CD14-positive monocyte (primary cell): ENCODE measurements at regions of chr19 and their contacts with region 1.

Region 1: GRCh38 chr19:51367565-51368365 is 1.0 kb downstream of the CLDND2 start:
- DNase-seq: peak; percentile 94 to 98 (median 95)
- H3K4me3 ChIP-seq: peak overlapping the region; percentile 89 to 93 (median 91)
- H3K4me3 Mint-ChIP-seq: peak overlapping the region; percentile 96 to 99
- H3K27ac ChIP-seq: peak overlapping the region; percentile 92 to 93
- H3K27ac Mint-ChIP-seq: peak overlapping the region; percentile 93 to 99 (median 97)
- H3K4me1 ChIP-seq: peaks cover 51 to 83% of the 10 kb centered on the region in 2 donors
- H3K4me1 Mint-ChIP-seq: peaks cover 71% of the 10 kb centered on the region
- H3K27me3 ChIP-seq: no peaks in the 10 kb centered on the region
- H3K27me3 Mint-ChIP-seq: peaks cover 0 to 6% (median 0%) of the 10 kb centered on the region in 3 donors
- CTCF ChIP-seq: no peak

Region 2: DNA sequence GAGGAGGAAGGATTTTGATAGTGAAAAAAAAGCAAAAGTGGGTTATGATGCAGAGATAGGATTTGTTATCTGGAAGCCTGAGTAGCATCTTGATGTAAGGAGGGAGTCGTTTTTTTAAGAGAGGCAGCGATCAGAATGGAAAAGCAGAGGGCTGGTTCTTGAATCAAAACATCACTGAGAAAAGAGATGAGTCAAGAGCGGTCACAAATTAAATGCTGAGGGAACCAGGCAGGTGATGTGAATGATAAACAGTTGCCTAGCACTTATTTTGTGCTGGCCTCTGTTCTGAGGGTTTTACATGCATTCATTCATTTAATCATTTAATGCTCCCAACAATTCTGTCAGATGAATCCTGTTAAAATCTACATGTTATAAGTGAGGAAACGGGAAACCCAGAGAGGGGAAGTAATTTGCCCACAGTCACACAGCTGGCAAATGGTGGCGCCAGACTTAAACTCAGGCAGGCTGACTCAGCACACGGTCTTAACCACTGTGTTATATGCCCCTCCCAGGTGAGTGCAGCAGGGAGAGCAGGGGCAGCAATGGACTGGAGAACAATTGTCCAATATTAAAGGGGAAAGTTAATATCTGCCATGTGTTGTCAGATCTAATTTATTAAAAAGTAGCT is 95.5 kb before region 1 on chr19:
- intact Hi-C with region 1: no loop called
- DNase-seq: peak; percentile 40 to 74 (median 53)
- H3K4me3 ChIP-seq: peak overlapping the region in 1 of 3 experiments; percentile 3
- H3K4me3 Mint-ChIP-seq: peak overlapping the region in 1 of 2 donors; percentile 54
- H3K27ac ChIP-seq: peak overlapping the region in 1 of 2 donors; percentile 52
- H3K27ac Mint-ChIP-seq: peak overlapping the region; percentile 46 to 88 (median 79)
- H3K4me1 ChIP-seq: peaks cover 17 to 34% of the 10 kb centered on the region in 2 donors
- H3K4me1 Mint-ChIP-seq: peaks cover 40% of the 10 kb centered on the region
- H3K27me3 ChIP-seq: no peaks in the 10 kb centered on the region
- H3K27me3 Mint-ChIP-seq: peaks cover 2 to 3% (median 2%) of the 10 kb centered on the region in 3 donors
- CTCF ChIP-seq: no peak

Region 3: DNA sequence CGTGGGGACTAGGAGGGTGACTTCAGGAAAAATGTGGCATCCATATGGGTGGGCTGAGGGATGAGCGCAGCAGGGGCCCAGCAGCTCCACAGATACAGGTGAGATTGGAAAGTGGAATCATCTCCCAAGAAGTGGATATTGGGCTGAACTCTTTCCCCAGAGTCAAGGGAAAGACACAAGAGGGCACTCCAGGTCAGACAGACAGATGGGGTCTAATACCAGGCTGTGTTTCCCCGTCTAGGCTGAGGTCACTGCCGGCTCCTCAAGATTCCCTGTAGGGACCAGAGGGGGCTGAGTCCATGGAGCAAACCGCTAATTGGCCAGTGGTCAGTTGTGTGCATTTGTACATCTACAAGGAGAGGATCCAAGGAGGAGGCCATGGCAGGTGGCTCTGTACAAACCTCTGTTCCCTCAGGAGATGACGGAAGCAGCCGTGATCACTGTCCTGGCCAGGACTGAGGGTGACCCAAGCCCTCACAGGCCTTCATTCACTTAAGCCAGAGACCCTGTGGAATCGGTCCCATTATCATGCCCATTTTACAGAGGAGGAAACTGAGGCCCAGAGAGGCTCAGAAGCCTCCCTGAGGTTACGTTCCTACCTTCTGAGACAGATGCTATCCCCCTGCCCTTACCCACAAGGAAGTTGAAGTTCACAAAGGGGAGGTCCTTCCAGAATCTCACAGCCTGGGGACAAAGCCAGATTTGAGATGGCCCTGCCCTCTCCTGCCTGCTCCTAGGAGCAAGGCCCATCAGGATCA is 71.2 kb before region 1 on chr19:
- intact Hi-C with region 1: no loop called
- DNase-seq: no peak
- H3K4me3 ChIP-seq: no peak overlapping the region
- H3K4me3 Mint-ChIP-seq: no peak overlapping the region
- H3K27ac ChIP-seq: no peak overlapping the region
- H3K27ac Mint-ChIP-seq: no peak overlapping the region
- H3K4me1 ChIP-seq: no peaks in the 10 kb centered on the region
- H3K4me1 Mint-ChIP-seq: no peaks in the 10 kb centered on the region
- H3K27me3 ChIP-seq: no peaks in the 10 kb centered on the region
- H3K27me3 Mint-ChIP-seq: peaks cover 10 to 30% (median 17%) of the 10 kb centered on the region in 3 donors
- CTCF ChIP-seq: no peak

Region 4: GRCh38 chr19:51327066-51328001 is 40.4 kb before region 1 on chr19:
- intact Hi-C with region 1: loop called in 1 of 2 experiments (anchors 5 kb)
- DNase-seq: peak; percentile 71 to 77 (median 72)
- H3K4me3 ChIP-seq: peak overlapping the region in 2 of 3 experiments; percentile 3 to 65
- H3K4me3 Mint-ChIP-seq: peak overlapping the region; percentile 60 to 96
- H3K27ac ChIP-seq: no peak overlapping the region
- H3K27ac Mint-ChIP-seq: peak overlapping the region in 5 of 7 donors; percentile 37 to 76 (median 46)
- H3K4me1 ChIP-seq: peaks cover 13 to 28% of the 10 kb centered on the region in 2 donors
- H3K4me1 Mint-ChIP-seq: peaks cover 28% of the 10 kb centered on the region
- H3K27me3 ChIP-seq: peaks cover 12 to 42% of the 10 kb centered on the region in 2 donors
- H3K27me3 Mint-ChIP-seq: peaks cover 43 to 63% (median 50%) of the 10 kb centered on the region in 3 donors
- CTCF ChIP-seq: peak; percentile 24